ENCODE measurements at regions of chr17 and their contacts with region 1.

Region 1: DNA sequence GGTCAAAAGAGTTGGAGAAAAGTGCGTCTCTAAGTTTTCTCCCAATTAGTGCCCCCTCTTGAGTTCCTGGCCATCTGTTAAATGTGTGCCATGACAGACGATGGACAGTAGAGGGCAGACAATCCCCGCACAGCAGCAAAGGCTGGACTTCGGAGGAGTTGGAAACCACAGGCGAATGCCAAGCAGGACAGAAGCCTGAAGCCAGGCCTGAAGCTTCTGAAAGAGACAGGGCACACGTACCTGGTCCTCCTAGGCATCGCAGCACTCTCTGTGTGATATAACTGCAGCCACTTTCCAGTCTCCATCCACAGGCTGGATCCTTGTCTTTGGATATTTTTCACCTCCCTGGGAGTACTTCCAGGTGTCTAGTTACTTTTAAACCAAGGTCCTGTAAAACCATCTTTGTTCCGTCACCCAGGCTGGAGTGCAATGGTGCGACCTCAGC is 14.5 kb downstream of the C17orf100 start:
- DNase-seq: no peak
- ATAC-seq: peak; percentile 95
- H3K4me3 Mint-ChIP-seq: no peak overlapping the region
- H3K27ac Mint-ChIP-seq: no peak overlapping the region
- H3K4me1 Mint-ChIP-seq: peaks cover 34% of the 10 kb centered on the region
- H3K27me3 Mint-ChIP-seq: no peaks in the 10 kb centered on the region
- CTCF ChIP-seq: no peak

Region 2: DNA sequence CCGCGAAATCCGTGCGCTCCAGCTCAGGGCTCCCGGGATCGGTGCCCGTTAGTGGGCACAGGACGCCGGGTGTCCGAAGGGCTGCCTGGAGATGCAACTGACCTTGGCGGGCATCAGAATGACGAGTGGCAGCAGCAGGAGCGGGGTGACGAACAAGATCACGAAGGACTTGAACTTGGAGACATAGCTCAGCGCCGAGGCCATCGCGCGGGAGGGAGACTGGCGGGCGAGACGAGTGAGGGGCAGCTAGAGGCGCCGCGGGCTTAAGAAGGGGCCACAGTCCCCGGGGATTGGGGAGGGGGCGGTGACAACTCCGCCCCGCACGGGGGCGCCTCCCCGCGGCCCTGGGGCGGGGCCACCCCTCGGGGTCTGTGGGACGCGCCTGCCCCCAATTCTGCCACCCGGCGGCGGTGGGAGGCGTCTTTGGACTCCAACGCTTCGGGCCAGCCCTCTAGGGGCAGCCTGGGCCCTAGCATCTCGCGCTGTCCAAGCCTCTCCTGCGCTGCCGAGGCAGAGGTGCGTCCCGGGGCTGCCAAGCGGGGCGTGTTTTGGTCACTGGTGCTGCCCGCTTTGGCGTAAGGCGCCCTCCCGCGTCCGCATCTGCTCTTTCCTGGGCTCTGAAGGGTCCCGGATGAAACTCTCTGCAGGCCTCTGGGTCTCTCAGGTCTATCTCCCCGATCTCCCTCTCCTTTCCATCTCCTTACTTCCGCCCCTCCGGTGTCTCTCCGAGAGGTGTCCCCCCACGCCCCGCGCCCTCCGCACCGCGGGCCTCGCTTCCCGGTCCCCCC is 47.2 kb after region 1 on chr17 and contains the start of gene SLC13A5:
- CTCF ChIA-PET with region 1: no interaction called
- POLR2A ChIA-PET with region 1: no interaction called
- intact Hi-C with region 1: loop called (anchors 2 kb)
- DNase-seq: peak; percentile 21
- ATAC-seq: peak; percentile 68
- H3K4me3 Mint-ChIP-seq: peak within 1 kb of the TSS; percentile 58
- H3K27ac Mint-ChIP-seq: no peak within 1 kb of the TSS
- H3K4me1 Mint-ChIP-seq: peaks cover 22% of the 10 kb centered on the region
- H3K27me3 Mint-ChIP-seq: peaks cover 57% of the 10 kb centered on the region
- CTCF ChIP-seq: no peak
- total RNA-seq, gene SLC13A5: not detected in 2 replicates

Region 3: GRCh38 chr17:6800422-6801027 is 134.4 kb after region 1 on chr17:
- CTCF ChIA-PET with region 1: no interaction called
- POLR2A ChIA-PET with region 1: no interaction called
- intact Hi-C with region 1: loop called (anchors 1 kb)
- DNase-seq: no peak
- ATAC-seq: no peak
- H3K4me3 Mint-ChIP-seq: no peak overlapping the region
- H3K27ac Mint-ChIP-seq: no peak overlapping the region
- H3K4me1 Mint-ChIP-seq: no peaks in the 10 kb centered on the region
- H3K27me3 Mint-ChIP-seq: peaks cover 2% of the 10 kb centered on the region
- CTCF ChIP-seq: no peak

Region 4: GRCh38 chr17:6872137-6872808 is 206.2 kb after region 1 on chr17:
- CTCF ChIA-PET with region 1: no interaction called
- POLR2A ChIA-PET with region 1: no interaction called
- intact Hi-C with region 1: no loop called
- DNase-seq: no peak
- ATAC-seq: no peak
- H3K4me3 Mint-ChIP-seq: no peak overlapping the region
- H3K27ac Mint-ChIP-seq: no peak overlapping the region
- H3K4me1 Mint-ChIP-seq: no peaks in the 10 kb centered on the region
- H3K27me3 Mint-ChIP-seq: peaks cover 6% of the 10 kb centered on the region
- CTCF ChIP-seq: no peak

Region 5: GRCh38 chr17:7004398-7005253 is 338.5 kb after region 1 on chr17:
- CTCF ChIA-PET with region 1: interaction called, 4 read pairs
- POLR2A ChIA-PET with region 1: no interaction called
- intact Hi-C with region 1: loop called (anchors 5 kb)
- DNase-seq: no peak
- ATAC-seq: peak; percentile 95
- H3K4me3 Mint-ChIP-seq: no peak overlapping the region
- H3K27ac Mint-ChIP-seq: peak overlapping the region; percentile 54
- H3K4me1 Mint-ChIP-seq: peaks cover 22% of the 10 kb centered on the region
- H3K27me3 Mint-ChIP-seq: no peaks in the 10 kb centered on the region
- CTCF ChIP-seq: peak; percentile 50